ENCODE measurements at regions of chr16 and their contacts with region 1.

Region 1: DNA sequence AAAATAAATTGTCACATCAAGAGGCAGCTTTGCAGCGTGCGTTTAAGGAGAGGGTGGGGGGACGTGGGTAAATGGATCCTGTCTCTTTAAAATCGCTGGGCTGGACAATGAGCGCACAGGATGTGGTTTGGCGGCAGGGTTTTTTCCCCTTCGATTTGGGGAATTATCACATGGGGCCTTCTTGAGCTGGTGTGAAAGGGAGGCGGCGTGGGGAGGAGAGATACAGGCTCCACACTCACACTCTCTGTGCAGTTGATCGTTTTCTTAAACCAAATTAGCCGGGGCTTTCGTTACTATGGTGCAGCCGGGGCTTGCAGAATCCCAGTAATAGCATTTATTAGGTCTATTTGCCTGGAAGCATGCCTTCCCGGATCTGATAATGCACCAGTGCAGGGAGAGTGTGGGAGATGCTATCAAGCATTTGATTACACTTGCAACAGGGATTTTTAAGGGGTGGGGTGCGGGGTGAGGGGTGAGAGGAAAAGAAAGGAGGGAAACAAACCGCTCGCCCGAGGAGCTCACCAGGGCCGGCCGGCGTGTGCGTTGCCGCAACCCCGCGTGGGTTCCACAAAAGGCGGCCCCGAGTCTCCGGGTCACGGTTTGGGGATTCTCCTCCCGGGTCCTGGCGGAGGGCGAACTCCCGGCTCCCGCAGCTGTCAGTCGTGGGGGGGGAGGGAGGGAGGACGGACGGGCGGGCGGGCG is 58.9 kb upstream of the GSE1 start:
- DNase-seq: peak; percentile 93
- H3K4me3 Mint-ChIP-seq: peak overlapping the region; percentile 79
- H3K27ac Mint-ChIP-seq: peak overlapping the region; percentile 93
- H3K4me1 Mint-ChIP-seq: peaks cover 42% of the 10 kb centered on the region
- H3K27me3 Mint-ChIP-seq: no peaks in the 10 kb centered on the region

Region 2: GRCh38 chr16:84647828-84648594 is 906.3 kb before region 1 on chr16 and contains the start of gene KLHL36:
- CTCF ChIA-PET with region 1: no interaction called
- intact Hi-C with region 1: loop called (anchors 10 kb)
- DNase-seq: peak; percentile 62
- H3K4me3 Mint-ChIP-seq: peak within 1 kb of the TSS; percentile 76
- H3K27ac Mint-ChIP-seq: peak within 1 kb of the TSS; percentile 51
- H3K4me1 Mint-ChIP-seq: peaks cover 42% of the 10 kb centered on the region
- H3K27me3 Mint-ChIP-seq: no peaks in the 10 kb centered on the region
- total RNA-seq, gene KLHL36: 45.7 to 50.3 TPM

Region 3: GRCh38 chr16:85420501-85421337 is 133.5 kb before region 1 on chr16:
- CTCF ChIA-PET with region 1: interaction called, 4 read pairs
- intact Hi-C with region 1: loop called (anchors 2 kb)
- DNase-seq: peak; percentile 71
- H3K4me3 Mint-ChIP-seq: no peak overlapping the region
- H3K27ac Mint-ChIP-seq: no peak overlapping the region
- H3K4me1 Mint-ChIP-seq: peaks cover 4% of the 10 kb centered on the region
- H3K27me3 Mint-ChIP-seq: no peaks in the 10 kb centered on the region

Region 4: DNA sequence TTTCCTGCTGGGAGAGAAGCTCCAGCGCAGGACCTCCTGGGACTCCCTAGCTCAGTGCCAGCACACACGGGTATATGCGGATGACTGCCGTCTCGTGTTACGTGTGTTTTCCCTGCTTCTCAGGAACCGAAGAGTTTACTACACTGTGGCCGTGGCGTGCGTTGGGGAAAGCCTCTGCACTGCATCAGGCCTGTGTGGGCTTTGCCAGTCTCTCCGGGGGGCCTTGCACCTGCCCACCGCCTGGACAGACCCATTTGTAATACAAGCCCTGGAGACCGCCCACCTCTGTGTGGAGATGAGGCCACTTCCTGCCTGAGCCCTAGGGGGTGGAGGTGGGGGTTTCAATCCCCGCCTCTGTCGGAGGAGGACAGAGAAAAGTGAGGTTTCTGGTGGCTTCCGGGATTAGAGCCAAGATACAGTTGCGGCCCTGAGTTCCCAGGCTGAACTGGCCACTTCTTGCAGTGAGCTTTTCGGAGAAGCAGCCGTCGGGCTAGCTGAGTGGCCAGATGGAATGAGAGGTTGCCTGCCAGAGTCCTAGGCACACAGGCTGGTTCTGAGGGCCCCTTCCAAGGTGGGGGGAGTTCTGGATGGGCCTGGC is 15.5 kb after region 1 on chr16:
- CTCF ChIA-PET with region 1: interaction called, 20 read pairs
- intact Hi-C with region 1: loop called (anchors 1 kb)
- DNase-seq: peak; percentile 50
- H3K4me3 Mint-ChIP-seq: no peak overlapping the region
- H3K27ac Mint-ChIP-seq: peak overlapping the region; percentile 59
- H3K4me1 Mint-ChIP-seq: peaks cover 48% of the 10 kb centered on the region
- H3K27me3 Mint-ChIP-seq: no peaks in the 10 kb centered on the region

Region 5: DNA sequence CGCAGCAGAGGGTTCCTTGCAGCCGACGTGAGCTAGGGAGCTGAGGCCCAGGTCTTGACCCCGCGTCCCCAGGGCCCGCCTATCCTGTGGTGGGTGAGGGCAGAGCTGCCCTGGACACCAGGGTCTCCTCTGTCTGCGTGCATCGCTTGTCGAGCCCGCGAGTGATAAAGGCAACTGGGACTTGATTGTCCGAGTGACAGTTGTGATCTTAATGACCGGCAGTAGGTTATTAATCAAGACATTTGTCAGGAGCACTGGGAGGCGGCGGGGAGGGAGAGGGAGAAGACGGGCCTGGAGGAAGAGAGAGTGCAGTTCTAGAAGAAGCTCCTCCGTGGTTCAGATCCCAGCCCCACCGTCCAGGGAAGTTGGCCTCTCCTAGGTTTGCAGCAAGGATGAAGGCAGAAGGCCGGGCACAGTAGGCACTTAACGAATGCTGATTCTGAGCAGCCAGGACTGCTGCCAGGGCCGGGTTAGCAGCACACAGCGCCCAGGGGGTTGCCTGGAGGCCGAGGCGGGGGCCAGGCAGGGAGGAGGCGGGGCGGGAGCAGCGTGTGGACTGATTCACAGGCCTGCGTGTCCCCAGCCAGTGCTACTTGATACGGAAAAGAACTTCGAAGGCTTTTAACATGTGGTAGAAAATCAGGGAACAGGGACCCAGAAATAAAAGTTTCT is 47.6 kb after region 1 on chr16:
- CTCF ChIA-PET with region 1: no interaction called
- intact Hi-C with region 1: no loop called
- DNase-seq: no peak
- H3K4me3 Mint-ChIP-seq: no peak overlapping the region
- H3K27ac Mint-ChIP-seq: peak overlapping the region; percentile 46
- H3K4me1 Mint-ChIP-seq: no peaks in the 10 kb centered on the region
- H3K27me3 Mint-ChIP-seq: no peaks in the 10 kb centered on the region

Region 6: DNA sequence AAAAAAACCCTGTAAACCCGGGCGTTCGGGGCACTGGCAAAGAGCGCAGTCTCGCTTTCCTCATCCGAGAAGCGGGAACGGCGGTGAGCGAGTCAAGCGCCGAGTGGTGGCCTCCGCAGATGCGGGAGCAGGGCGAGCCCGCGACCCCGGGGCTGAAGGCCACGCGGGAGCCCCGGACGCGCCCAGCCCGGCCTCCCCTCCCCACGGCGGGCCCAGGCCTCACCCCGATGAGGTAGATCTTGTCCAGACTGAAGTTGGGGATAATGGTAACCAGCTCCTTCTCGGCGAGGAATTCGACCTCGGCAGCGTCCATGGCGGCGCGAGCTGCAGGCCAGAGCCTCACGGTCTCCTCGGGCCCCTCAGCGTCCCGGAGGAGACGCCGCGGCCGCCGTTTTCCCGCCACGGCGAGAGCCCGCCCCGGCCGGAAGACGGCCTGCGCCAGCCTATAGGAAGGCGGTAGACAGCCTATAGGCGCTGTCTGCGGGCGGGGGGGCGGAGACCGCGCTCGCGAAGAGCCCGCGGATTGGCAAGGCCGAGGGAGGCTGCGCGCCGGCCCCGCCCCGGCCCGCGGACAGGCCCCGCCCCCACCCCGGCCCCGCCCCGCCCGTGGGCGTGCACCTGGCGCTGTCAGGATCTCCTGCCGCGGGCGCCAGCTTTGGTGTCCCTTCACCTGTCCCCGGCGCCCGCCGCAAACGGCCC is 134.5 kb after region 1 on chr16 and contains the start of gene GINS2:
- CTCF ChIA-PET with region 1: no interaction called
- intact Hi-C with region 1: loop called (anchors 2 kb)
- DNase-seq: peak; percentile 93
- H3K4me3 Mint-ChIP-seq: peak within 1 kb of the TSS; percentile 84
- H3K27ac Mint-ChIP-seq: peak within 1 kb of the TSS; percentile 66
- H3K4me1 Mint-ChIP-seq: peaks cover 21% of the 10 kb centered on the region
- H3K27me3 Mint-ChIP-seq: peaks cover 2% of the 10 kb centered on the region
- total RNA-seq, gene GINS2: 60.7 to 66.6 TPM